ENCODE measurements at regions of chr17 and their contacts with region 1.

Region 1: DNA sequence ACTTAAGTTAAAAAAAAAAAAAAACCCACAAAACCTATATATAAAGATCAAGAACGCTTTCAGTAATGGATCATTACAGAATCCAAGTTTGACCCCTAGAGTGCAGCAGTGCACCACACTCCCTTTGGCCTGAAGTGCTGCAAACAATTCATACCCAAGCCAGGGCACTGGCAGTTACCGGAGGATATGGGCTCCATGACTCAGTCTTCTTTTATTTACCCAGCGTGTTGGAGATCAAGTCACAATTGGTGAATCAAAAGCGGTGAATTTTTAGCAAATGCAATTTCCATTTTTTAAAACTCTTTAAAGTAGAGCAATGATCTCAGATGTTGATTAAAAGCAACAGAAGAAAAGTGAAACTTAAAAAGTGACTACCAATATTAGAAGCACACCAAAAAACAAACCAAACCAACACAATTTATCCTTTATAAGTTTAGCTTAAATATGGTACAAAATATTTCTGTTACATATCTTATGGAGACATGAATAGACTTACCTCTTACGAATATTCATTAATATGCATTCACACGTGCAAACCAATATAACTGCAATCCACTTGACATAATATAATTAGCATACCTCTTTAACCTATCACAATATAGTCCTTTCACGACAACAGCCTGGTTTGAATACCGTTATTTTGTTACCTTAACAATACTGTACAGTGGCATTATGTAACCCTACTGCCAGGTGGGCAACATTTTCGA is 46.3 kb downstream of the ZNF652 start:
- DNase-seq: peak; percentile 41 to 83 (median 75)
- ATAC-seq: peak; percentile 99
- H3K4me3 ChIP-seq: no peak overlapping the region
- H3K4me3 Mint-ChIP-seq: peak overlapping the region; percentile 3 to 86 (median 78)
- H3K27ac ChIP-seq: no peak overlapping the region
- H3K27ac Mint-ChIP-seq: peak overlapping the region; percentile 44 to 94 (median 70)
- H3K4me1 ChIP-seq: no peaks in the 10 kb centered on the region
- H3K4me1 Mint-ChIP-seq: peaks cover 16 to 40% (median 36%) of the 10 kb centered on the region in 7 donors
- H3K27me3 ChIP-seq: no peaks in the 10 kb centered on the region
- H3K27me3 Mint-ChIP-seq: no peaks in the 10 kb centered on the region

Region 2: DNA sequence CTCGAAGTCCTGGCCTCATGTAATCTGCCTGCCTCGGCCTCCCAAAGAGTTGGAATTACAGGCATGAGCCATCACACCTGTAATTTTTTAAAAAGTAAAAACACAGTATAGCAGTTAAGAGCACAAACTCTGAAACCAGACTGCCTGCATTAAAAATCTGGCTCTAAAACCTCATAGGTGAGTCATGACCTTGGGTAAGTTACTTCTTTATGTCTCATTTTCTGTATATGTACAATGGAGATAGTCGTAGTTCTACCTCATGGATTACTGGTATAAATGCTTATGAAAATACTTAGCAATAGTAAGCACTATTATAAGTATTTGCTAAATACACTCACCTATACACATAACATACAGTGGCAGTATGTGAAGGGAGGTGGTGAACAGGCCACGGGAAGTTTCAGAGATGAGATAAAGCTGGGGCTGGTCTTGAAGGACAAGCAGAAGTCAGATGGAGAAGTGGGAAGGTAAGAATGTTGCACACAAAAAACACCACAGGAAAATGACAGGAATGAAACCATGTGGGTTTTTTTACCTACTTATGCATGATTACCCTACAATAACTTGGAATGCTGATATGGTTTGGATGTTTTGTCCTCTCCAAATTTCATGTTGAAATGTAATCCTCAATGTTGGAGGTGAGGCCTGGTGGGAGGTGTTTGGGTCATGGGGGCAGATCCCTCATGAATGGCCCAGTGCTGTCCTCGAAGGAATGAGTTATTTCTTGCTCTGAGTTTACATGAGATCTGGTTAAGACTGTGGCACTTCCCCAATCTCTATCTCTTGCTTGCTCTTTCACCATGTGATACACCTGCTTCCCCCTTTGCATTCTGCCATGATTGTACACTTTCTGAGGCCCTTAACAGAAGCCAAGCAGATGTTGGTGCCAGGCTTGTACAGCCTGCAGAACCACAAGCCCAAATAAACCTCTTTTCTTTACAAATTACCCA is 12.4 kb after region 1 on chr17:
- CTCF ChIA-PET with region 1: interaction called, 12 read pairs
- POLR2A ChIA-PET with region 1: no interaction called
- intact Hi-C with region 1: no loop called
- DNase-seq: no peak
- ATAC-seq: peak; percentile 61
- H3K4me3 ChIP-seq: no peak overlapping the region
- H3K4me3 Mint-ChIP-seq: no peak overlapping the region
- H3K27ac ChIP-seq: no peak overlapping the region
- H3K27ac Mint-ChIP-seq: peak overlapping the region in 6 of 9 donors; percentile 0 to 52 (median 11)
- H3K4me1 ChIP-seq: no peaks in the 10 kb centered on the region
- H3K4me1 Mint-ChIP-seq: peaks cover 28 to 67% (median 60%) of the 10 kb centered on the region in 7 donors
- H3K27me3 ChIP-seq: no peaks in the 10 kb centered on the region
- H3K27me3 Mint-ChIP-seq: no peaks in the 10 kb centered on the region

Region 3: DNA sequence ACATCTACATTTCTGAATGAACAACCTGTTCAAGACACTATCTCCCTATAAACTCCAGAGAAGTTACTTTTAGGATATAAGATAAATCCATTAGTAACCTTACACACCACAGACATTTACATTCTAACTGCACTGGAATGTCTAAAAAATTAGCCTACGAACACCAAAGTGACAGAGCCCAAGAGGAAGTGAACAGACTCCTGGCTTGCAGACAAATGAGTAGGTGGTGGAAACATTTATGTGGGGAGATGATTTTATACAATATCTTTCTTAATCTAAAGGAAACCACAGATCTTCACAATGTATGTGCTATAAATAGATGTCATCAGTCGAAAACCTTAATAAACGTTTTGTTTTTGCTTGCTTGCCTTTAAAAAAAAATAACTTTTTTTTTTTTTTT is 27.6 kb after region 1 on chr17:
- CTCF ChIA-PET with region 1: interaction called, 9 read pairs
- POLR2A ChIA-PET with region 1: interaction called, 3 read pairs
- intact Hi-C with region 1: loop called in 1 of 2 experiments (anchors 1 kb)
- DNase-seq: peak in 4 of 9 donors; percentile 12 to 35 (median 26)
- ATAC-seq: no peak
- H3K4me3 ChIP-seq: peak overlapping the region; percentile 10
- H3K4me3 Mint-ChIP-seq: peak overlapping the region; percentile 35 to 85 (median 79)
- H3K27ac ChIP-seq: no peak overlapping the region
- H3K27ac Mint-ChIP-seq: peak overlapping the region; percentile 6 to 90 (median 72)
- H3K4me1 ChIP-seq: peaks cover 13 to 51% of the 10 kb centered on the region in 2 donors
- H3K4me1 Mint-ChIP-seq: peaks cover 39 to 82% (median 68%) of the 10 kb centered on the region in 7 donors
- H3K27me3 ChIP-seq: no peaks in the 10 kb centered on the region
- H3K27me3 Mint-ChIP-seq: peaks cover 0 to 9% (median 0%) of the 10 kb centered on the region in 5 donors

Region 4: GRCh38 chr17:49369089-49369488 is 53.4 kb after region 1 on chr17:
- CTCF ChIA-PET with region 1: interaction called, 69 read pairs
- POLR2A ChIA-PET with region 1: interaction called, 12 read pairs
- intact Hi-C with region 1: loop called (anchors 1 kb)
- DNase-seq: no peak
- ATAC-seq: no peak
- H3K4me3 ChIP-seq: no peak overlapping the region
- H3K4me3 Mint-ChIP-seq: no peak overlapping the region
- H3K27ac ChIP-seq: no peak overlapping the region
- H3K27ac Mint-ChIP-seq: no peak overlapping the region
- H3K4me1 ChIP-seq: peaks cover 0 to 10% of the 10 kb centered on the region in 2 donors
- H3K4me1 Mint-ChIP-seq: peaks cover 6 to 20% (median 16%) of the 10 kb centered on the region in 7 donors
- H3K27me3 ChIP-seq: no peaks in the 10 kb centered on the region
- H3K27me3 Mint-ChIP-seq: no peaks in the 10 kb centered on the region

Region 5: DNA sequence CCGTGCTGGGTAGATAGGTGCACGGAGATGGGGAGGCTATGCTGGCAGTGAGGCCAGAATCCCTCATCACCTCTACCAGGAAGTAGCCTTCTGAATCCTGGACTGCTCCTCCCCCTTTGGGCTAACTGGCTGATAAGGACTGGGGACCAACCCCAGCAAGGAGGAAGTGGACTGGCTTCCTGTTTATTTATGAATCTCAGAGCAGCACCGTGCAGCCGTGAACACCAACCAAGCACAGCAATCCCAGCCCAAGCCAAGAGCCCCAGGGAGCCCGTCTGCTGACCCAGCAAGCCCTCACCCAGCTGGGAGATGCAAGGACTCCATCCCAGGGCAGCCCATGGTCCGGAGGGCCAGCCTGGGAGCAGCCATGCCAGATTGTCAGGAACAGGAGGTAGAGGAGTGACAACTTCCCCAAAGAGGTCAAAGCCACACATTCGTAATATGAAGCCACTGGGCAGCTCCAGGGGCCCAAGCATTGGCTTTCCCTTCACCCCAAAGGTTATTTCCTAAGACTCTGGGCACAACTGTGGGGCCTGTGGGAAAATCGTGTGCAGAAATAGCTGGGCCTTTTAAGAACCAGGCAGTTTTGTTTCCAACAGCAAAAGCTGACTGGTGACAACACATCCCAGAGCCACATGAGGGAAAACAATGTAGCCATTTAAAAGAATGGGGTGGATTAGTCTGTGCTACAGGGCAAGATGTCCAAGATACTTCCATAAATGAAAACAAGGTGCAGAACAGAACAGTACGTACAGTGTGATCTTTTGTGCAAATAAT is 75.0 kb after region 1 on chr17:
- CTCF ChIA-PET with region 1: interaction called, 51 read pairs
- POLR2A ChIA-PET with region 1: interaction called, 6 read pairs
- intact Hi-C with region 1: loop called (anchors 1 kb)
- DNase-seq: no peak
- ATAC-seq: peak; percentile 48
- H3K4me3 ChIP-seq: peak overlapping the region; percentile 29
- H3K4me3 Mint-ChIP-seq: peak overlapping the region; percentile 21 to 83 (median 58)
- H3K27ac ChIP-seq: no peak overlapping the region
- H3K27ac Mint-ChIP-seq: peak overlapping the region; percentile 44 to 93 (median 71)
- H3K4me1 ChIP-seq: peaks cover 43 to 51% of the 10 kb centered on the region in 2 donors
- H3K4me1 Mint-ChIP-seq: peaks cover 48 to 70% (median 63%) of the 10 kb centered on the region in 7 donors
- H3K27me3 ChIP-seq: no peaks in the 10 kb centered on the region
- H3K27me3 Mint-ChIP-seq: no peaks in the 10 kb centered on the region

Region 6: DNA sequence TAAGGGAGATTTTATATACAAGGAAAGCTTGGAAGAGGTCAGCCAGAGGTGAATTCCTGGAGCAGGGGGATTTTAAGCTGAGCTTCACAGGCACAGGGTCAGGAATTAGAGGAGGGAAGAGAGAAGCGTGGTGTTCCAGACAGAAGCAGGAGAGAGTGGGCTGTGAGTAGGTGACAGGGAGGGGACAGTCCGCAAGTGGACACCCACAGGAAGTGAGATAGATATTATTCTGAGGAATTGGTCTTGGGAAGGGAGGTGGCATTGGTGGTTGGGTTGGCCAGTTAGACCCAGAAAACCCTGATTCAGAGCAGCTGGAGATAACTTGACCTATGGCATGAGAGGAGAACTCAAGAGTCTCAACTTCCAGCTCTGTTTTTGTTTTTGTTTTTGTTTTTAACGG is 84.3 kb after region 1 on chr17:
- CTCF ChIA-PET with region 1: interaction called, 51 read pairs
- POLR2A ChIA-PET with region 1: no interaction called
- intact Hi-C with region 1: loop called (anchors 1 kb)
- DNase-seq: no peak
- ATAC-seq: no peak
- H3K4me3 ChIP-seq: no peak overlapping the region
- H3K4me3 Mint-ChIP-seq: no peak overlapping the region
- H3K27ac ChIP-seq: no peak overlapping the region
- H3K27ac Mint-ChIP-seq: no peak overlapping the region
- H3K4me1 ChIP-seq: peaks cover 0 to 14% of the 10 kb centered on the region in 2 donors
- H3K4me1 Mint-ChIP-seq: peaks cover 5 to 22% (median 15%) of the 10 kb centered on the region in 7 donors
- H3K27me3 ChIP-seq: no peaks in the 10 kb centered on the region
- H3K27me3 Mint-ChIP-seq: peaks cover 0 to 4% (median 0%) of the 10 kb centered on the region in 5 donors